ENCODE measurements at regions of chr10 and their contacts with region 1.

Region 1: DNA sequence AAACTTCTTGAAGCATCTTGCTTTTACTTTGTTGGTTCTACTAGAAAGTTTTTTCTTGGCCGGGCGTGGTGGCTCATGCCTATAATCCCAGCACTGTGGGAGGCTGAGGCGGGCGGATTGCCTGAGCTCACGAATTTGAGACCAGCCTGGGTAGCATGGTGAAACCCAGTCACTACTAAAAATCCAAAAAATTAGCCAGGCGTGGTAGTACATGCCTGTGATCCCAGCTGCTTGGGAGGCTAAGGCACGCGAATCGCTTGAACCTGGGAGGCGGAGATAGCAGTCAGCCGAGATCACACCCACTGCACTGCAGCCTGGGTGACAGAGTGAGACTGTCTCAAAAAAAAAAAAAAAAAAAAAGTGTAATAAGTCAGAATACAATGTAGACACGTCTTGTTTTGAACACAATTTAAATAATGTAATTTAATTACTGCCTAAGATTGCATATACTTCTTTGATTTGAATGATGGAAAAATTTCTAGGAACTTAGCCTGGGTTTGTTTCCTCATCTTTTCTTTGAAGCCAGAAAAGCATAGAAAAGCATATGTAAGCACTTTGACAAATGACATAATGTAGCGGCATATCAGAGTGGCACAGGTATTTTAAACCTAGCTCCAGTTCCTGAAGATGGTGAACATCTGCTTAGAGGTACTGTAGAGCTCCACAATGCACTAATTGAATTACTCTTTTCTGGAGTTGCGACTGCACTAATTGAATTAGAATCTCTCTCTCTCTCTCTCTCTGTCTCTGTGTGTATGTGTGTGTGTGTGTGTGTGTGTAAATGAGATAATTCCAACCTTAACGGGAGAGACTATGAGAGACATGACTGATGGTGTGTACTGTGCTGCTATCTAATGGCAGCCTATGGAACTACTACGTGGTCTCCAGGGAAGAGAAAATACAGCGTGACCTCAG is 87.8 kb downstream of the BTRC start:
- DNase-seq: peak; percentile 65
- H3K4me3 ChIP-seq: no peak overlapping the region
- H3K27ac ChIP-seq: no peak overlapping the region
- H3K4me1 ChIP-seq: peaks cover 0 to 9% of the 10 kb centered on the region in 2 experiments; a peak in 2 of 4 replicates
- H3K27me3 ChIP-seq: no peaks in the 10 kb centered on the region
- CTCF ChIP-seq: peak; percentile 68
- EP300 ChIP-seq: no peak
- RAD21 ChIP-seq: peak; percentile 90

Region 2: DNA sequence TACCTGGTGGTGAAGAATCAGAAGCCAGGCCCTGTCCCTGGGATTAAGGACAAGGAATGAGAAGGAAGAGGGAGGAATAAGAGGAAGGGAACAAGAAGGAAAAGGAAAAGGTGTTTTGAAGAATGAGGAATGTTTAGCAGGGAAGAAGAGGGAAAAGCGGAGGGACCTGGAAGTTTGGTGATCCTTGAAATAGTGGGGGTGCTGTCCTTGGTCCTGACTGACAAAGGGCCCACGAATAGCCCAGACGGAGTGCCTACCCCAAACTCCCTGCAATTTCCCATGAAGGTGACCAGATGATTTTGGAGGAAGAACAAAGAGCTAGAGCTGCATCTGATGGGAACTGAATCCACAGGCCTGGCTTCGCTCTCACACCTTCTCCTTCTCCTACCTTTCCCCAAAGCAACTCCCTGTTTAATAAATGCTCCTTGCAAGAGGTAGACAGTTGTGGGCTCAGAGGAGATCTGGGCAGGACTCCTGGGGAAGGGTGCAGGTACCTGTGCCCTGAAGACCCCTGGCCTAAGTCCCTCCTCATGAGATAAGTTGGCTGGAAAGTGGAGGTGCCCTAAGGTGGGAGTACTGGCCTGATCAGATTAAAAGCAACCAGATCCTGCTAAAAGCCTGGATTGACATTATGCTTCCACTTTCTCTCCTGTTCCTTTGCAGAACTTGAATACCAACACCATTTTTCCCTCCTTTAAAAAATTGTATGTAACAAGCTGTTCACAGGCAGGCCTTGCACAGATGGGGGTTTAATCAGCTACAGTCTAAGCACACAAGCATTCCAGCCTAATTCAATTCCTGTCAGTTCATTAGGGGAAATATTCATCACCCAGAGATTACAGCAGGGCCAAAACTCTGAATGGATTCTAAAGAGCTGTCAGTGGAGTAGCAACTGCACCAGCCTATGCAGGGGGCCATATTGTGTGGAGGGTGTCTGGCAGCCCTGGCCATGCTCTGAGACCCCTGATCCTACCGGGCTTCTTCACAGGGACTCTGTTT is 360.6 kb before region 1 on chr10:
- CTCF ChIA-PET with region 1: no interaction called
- POLR2A ChIA-PET with region 1: no interaction called
- DNase-seq: no peak
- H3K4me3 ChIP-seq: no peak overlapping the region
- H3K27ac ChIP-seq: no peak overlapping the region
- H3K4me1 ChIP-seq: peaks cover 0 to 21% of the 10 kb centered on the region in 2 experiments; a peak in 1 of 4 replicates
- H3K27me3 ChIP-seq: peaks cover 32% of the 10 kb centered on the region; the same call in 1 of the 2 replicates
- CTCF ChIP-seq: no peak
- EP300 ChIP-seq: no peak; a peak in 1 of 4 replicates
- RAD21 ChIP-seq: no peak

Region 3: GRCh38 chr10:101130984-101131961 is 310.5 kb before region 1 on chr10 and contains the start of gene TLX1:
- CTCF ChIA-PET with region 1: no interaction called
- POLR2A ChIA-PET with region 1: no interaction called
- DNase-seq: peak; percentile 80
- H3K4me3 ChIP-seq: peak within 1 kb of the TSS; percentile 33 to 51; a peak in 3 of 4 replicates
- H3K27ac ChIP-seq: no peak within 1 kb of the TSS
- H3K4me1 ChIP-seq: peaks cover 0 to 2% of the 10 kb centered on the region in 2 experiments; a peak in 1 of 4 replicates
- H3K27me3 ChIP-seq: peaks cover 86% of the 10 kb centered on the region
- CTCF ChIP-seq: no peak
- EP300 ChIP-seq: no peak
- RAD21 ChIP-seq: no peak
- polyA plus RNA-seq, gene TLX1: 0.02 TPM in 1 of 2 replicates, not detected in the other

Region 4: GRCh38 chr10:101291331-101292193 is 150.2 kb before region 1 on chr10:
- CTCF ChIA-PET with region 1: interaction called, 243 read pairs
- POLR2A ChIA-PET with region 1: interaction called, 4 read pairs
- DNase-seq: peak; percentile 94
- H3K4me3 ChIP-seq: peak overlapping the region; percentile 57 to 75
- H3K27ac ChIP-seq: peak overlapping the region in 1 of 2 experiments; percentile 92; a peak in 2 of 4 replicates
- H3K4me1 ChIP-seq: peaks cover 0 to 15% of the 10 kb centered on the region in 2 experiments; a peak in 1 of 4 replicates
- H3K27me3 ChIP-seq: peaks cover 16% of the 10 kb centered on the region; the same call in 1 of the 2 replicates
- CTCF ChIP-seq: peak; percentile 62
- EP300 ChIP-seq: no peak
- RAD21 ChIP-seq: peak; percentile 66

Region 5: GRCh38 chr10:101311185-101312066 is 130.4 kb before region 1 on chr10:
- CTCF ChIA-PET with region 1: interaction called, 11 read pairs
- POLR2A ChIA-PET with region 1: no interaction called
- DNase-seq: peak; percentile 49
- H3K4me3 ChIP-seq: no peak overlapping the region
- H3K27ac ChIP-seq: peak overlapping the region in 1 of 2 experiments; percentile 32; a peak in 1 of 4 replicates
- H3K4me1 ChIP-seq: peaks cover 0 to 12% of the 10 kb centered on the region in 2 experiments; a peak in 1 of 4 replicates
- H3K27me3 ChIP-seq: peaks cover 3% of the 10 kb centered on the region; the same call in 1 of the 2 replicates
- CTCF ChIP-seq: no peak
- EP300 ChIP-seq: no peak
- RAD21 ChIP-seq: no peak

Region 6: GRCh38 chr10:101429423-101429822 is 12.4 kb before region 1 on chr10:
- CTCF ChIA-PET with region 1: interaction called, 22 read pairs
- POLR2A ChIA-PET with region 1: no interaction called
- DNase-seq: no peak
- H3K4me3 ChIP-seq: no peak overlapping the region
- H3K27ac ChIP-seq: no peak overlapping the region
- H3K4me1 ChIP-seq: no peaks in the 10 kb centered on the region
- H3K27me3 ChIP-seq: no peaks in the 10 kb centered on the region
- CTCF ChIP-seq: no peak
- EP300 ChIP-seq: no peak
- RAD21 ChIP-seq: no peak

Region 7: DNA sequence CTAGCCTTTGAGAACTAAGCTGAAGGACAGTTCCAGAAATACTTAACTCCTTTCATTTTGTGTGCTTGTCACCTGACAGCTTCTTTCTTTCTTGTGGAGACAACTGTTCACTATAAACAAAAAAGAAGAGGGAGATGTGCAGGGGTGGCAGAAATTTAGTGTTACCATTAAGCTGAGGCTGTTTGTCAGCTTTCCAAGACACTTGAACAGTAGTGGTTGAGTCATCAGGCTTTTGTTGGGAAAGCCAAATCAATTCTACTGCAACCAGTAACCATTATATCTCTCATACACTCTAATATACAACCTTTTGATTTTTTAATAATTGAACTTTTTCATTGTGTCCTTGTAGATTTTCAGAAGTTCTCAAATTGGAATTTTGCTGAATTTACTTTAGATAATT is 70.9 kb after region 1 on chr10:
- CTCF ChIA-PET with region 1: no interaction called
- POLR2A ChIA-PET with region 1: no interaction called
- DNase-seq: no peak
- H3K4me3 ChIP-seq: no peak overlapping the region
- H3K27ac ChIP-seq: no peak overlapping the region
- H3K4me1 ChIP-seq: peaks cover 0 to 2% of the 10 kb centered on the region in 2 experiments; a peak in 1 of 4 replicates
- H3K27me3 ChIP-seq: no peaks in the 10 kb centered on the region
- CTCF ChIP-seq: no peak
- EP300 ChIP-seq: no peak
- RAD21 ChIP-seq: no peak

Measured in SK-N-SH (cell line).